Mammary epithelial cell (primary cell): ENCODE measurements at regions of chr7 and their contacts with region 1.

Region 1: GRCh38 chr7:140810830-140811556 is 113.7 kb downstream of the BRAF start:
- DNase-seq: peak; percentile 55
- H3K4me3 ChIP-seq: no peak overlapping the region
- H3K27ac ChIP-seq: no peak overlapping the region
- H3K4me1 ChIP-seq: no peaks in the 10 kb centered on the region
- H3K27me3 ChIP-seq: no peaks in the 10 kb centered on the region
- CTCF ChIP-seq: peak; percentile 54 to 65

Region 2: GRCh38 chr7:140924019-140924820 is 113.2 kb after region 1 on chr7:
- CTCF ChIA-PET with region 1: interaction called, 4 read pairs
- dilution Hi-C with region 1: no loop called
- in situ Hi-C with region 1: no loop called
- intact Hi-C with region 1: loop called (anchors 1 kb)
- DNase-seq: peak; percentile 60
- H3K4me3 ChIP-seq: peak overlapping the region; percentile 75 to 89 (median 83)
- H3K27ac ChIP-seq: peak overlapping the region; percentile 90
- H3K4me1 ChIP-seq: peaks cover 4% of the 10 kb centered on the region
- H3K27me3 ChIP-seq: no peaks in the 10 kb centered on the region
- CTCF ChIP-seq: peak in 1 of 2 donors; percentile 44

Region 3: GRCh38 chr7:140983802-140984201 is 172.8 kb after region 1 on chr7:
- CTCF ChIA-PET with region 1: interaction called, 3 read pairs
- dilution Hi-C with region 1: no loop called
- in situ Hi-C with region 1: no loop called
- intact Hi-C with region 1: loop called (anchors 10 kb)
- DNase-seq: no peak
- H3K4me3 ChIP-seq: no peak overlapping the region
- H3K27ac ChIP-seq: no peak overlapping the region
- H3K4me1 ChIP-seq: no peaks in the 10 kb centered on the region
- H3K27me3 ChIP-seq: no peaks in the 10 kb centered on the region
- CTCF ChIP-seq: peak; percentile 22 to 24

Region 4: GRCh38 chr7:141220263-141220880 is 409.4 kb after region 1 on chr7:
- CTCF ChIA-PET with region 1: no interaction called
- dilution Hi-C with region 1: no loop called
- in situ Hi-C with region 1: no loop called
- intact Hi-C with region 1: loop called (anchors 5 kb)
- DNase-seq: no peak
- H3K4me3 ChIP-seq: no peak overlapping the region
- H3K27ac ChIP-seq: no peak overlapping the region
- H3K4me1 ChIP-seq: no peaks in the 10 kb centered on the region
- H3K27me3 ChIP-seq: no peaks in the 10 kb centered on the region
- CTCF ChIP-seq: peak; percentile 29 to 57